ENCODE measurements at regions of chr7 and their contacts with region 1.

Region 1: DNA sequence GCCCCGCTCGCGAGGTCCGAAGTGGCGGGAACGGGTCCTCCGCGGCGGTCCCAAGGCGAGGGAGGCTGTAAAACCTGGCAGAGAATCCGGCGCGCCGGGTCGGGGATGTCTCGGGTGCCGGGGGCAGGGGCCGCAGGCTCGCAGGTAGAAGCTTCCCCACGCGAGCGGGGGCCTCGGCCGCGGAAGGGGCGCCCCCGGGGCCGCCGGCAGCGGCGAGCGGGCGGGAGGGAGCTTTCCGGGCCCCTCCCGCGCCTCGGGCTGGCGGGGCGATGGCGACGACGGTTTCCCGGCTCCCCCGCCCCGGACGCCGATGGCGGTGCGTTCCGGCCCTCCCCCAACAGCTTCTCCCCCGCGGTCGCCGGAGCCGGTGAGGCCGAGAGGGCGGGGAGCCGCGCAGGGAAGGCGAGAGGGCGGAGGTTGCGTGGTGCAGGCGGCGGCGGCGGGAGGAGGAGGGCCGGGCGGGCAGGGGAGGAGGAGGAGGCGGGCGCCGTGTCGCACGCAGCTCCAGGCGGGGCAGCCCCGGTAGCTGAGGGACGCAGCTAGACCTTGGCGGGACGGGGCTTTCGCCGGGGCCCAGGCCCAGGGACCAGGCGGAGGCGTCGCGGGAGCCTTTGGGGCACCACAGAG is at the start of gene CUL1:
- DNase-seq: peak; percentile 75
- ATAC-seq: peak; percentile 76
- H3K4me3 Mint-ChIP-seq: peak within 1 kb of the TSS; percentile 90
- H3K27ac Mint-ChIP-seq: peak within 1 kb of the TSS; percentile 90
- H3K4me1 Mint-ChIP-seq: peaks cover 45% of the 10 kb centered on the region
- H3K27me3 Mint-ChIP-seq: no peaks in the 10 kb centered on the region
- CTCF ChIP-seq: no peak
- total RNA-seq, gene CUL1: 56.9 and 57.4 TPM in 2 replicates

Region 2: DNA sequence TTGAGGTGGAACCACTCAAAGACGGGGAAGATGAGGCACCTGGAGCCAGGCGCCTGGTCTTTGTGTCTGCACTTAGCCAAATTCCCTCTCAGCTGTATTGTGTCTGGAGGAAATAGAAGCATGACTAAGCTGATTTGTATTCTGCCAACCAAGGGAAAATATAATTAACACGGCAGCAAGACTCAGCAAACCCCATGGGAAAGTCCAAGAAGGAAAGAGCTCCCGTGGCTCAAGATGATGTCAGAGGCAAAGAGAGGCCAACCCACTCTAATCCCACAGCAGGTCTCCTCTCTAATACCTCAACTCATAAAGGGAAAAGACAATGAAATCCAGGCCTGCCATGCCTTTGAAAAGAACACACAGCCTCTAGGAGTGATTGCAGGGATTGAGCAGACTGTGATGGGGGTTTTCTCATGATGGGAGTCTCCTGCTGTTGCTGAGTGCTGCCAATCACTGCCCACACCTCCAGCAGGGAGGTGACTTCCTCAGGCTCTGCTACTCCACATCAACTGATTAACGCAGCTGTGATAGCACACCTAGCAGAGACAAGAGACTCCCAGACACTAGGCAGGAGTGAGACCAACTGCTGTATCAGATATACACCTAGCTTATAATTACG is 363.4 kb before region 1 on chr7:
- CTCF ChIA-PET with region 1: no interaction called
- POLR2A ChIA-PET with region 1: no interaction called
- intact Hi-C with region 1: loop called (anchors 1 kb)
- DNase-seq: no peak
- ATAC-seq: no peak
- H3K4me3 Mint-ChIP-seq: no peak overlapping the region
- H3K27ac Mint-ChIP-seq: no peak overlapping the region
- H3K4me1 Mint-ChIP-seq: peaks cover 17% of the 10 kb centered on the region
- H3K27me3 Mint-ChIP-seq: peaks cover 13% of the 10 kb centered on the region
- CTCF ChIP-seq: no peak

Region 3: DNA sequence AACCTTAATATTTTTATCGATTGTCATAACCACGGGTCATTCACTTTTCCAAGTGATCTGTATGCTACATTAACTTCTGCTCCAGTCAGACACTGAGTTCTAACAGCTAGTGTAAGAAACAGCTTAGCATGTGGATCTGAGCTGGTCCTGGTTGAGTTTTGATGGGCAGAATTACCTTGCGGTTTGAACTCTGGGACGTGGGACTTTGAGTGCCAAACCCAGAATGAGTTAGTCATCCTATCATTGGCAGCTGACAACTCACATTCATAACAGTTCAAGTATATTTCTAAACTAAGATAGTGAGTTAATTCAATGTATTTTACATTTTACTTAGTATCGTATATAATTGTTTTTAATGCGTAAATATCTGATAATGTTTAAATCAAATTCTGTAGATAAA is 64.7 kb before region 1 on chr7:
- CTCF ChIA-PET with region 1: no interaction called
- POLR2A ChIA-PET with region 1: interaction called, 3 read pairs
- intact Hi-C with region 1: loop called (anchors 5 kb)
- DNase-seq: no peak
- ATAC-seq: peak; percentile 61
- H3K4me3 Mint-ChIP-seq: peak overlapping the region; percentile 49
- H3K27ac Mint-ChIP-seq: peak overlapping the region; percentile 62
- H3K4me1 Mint-ChIP-seq: peaks cover 28% of the 10 kb centered on the region
- H3K27me3 Mint-ChIP-seq: no peaks in the 10 kb centered on the region
- CTCF ChIP-seq: no peak

Region 4: GRCh38 chr7:148674681-148675080 is 23.8 kb before region 1 on chr7:
- CTCF ChIA-PET with region 1: no interaction called
- POLR2A ChIA-PET with region 1: no interaction called
- intact Hi-C with region 1: no loop called
- DNase-seq: no peak
- ATAC-seq: no peak
- H3K4me3 Mint-ChIP-seq: no peak overlapping the region
- H3K27ac Mint-ChIP-seq: no peak overlapping the region
- H3K4me1 Mint-ChIP-seq: no peaks in the 10 kb centered on the region
- H3K27me3 Mint-ChIP-seq: peaks cover 14% of the 10 kb centered on the region
- CTCF ChIP-seq: no peak

Region 5: DNA sequence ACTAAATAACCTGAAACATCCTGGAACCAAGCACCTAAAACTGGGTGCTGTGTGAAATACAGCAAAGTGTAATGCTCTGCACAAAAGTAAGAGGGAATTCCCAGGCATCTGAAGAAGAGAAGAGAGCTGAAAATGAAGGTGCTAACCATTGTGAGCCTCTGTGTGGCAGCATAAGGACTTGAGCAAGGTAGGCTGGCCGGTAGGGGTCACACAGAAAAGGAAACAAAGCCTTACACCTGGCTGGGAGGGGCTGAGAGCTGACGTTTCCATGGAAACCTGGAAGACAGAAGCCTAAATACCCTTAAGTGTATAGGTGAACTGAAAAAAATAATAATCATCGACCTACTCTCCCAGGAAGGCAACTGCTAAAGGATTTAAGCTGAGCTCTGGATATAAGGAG is 48.8 kb after region 1 on chr7:
- CTCF ChIA-PET with region 1: no interaction called
- POLR2A ChIA-PET with region 1: no interaction called
- intact Hi-C with region 1: loop called (anchors 5 kb)
- DNase-seq: no peak
- ATAC-seq: peak; percentile 31
- H3K4me3 Mint-ChIP-seq: no peak overlapping the region
- H3K27ac Mint-ChIP-seq: no peak overlapping the region
- H3K4me1 Mint-ChIP-seq: peaks cover 2% of the 10 kb centered on the region
- H3K27me3 Mint-ChIP-seq: no peaks in the 10 kb centered on the region
- CTCF ChIP-seq: no peak

Region 6: DNA sequence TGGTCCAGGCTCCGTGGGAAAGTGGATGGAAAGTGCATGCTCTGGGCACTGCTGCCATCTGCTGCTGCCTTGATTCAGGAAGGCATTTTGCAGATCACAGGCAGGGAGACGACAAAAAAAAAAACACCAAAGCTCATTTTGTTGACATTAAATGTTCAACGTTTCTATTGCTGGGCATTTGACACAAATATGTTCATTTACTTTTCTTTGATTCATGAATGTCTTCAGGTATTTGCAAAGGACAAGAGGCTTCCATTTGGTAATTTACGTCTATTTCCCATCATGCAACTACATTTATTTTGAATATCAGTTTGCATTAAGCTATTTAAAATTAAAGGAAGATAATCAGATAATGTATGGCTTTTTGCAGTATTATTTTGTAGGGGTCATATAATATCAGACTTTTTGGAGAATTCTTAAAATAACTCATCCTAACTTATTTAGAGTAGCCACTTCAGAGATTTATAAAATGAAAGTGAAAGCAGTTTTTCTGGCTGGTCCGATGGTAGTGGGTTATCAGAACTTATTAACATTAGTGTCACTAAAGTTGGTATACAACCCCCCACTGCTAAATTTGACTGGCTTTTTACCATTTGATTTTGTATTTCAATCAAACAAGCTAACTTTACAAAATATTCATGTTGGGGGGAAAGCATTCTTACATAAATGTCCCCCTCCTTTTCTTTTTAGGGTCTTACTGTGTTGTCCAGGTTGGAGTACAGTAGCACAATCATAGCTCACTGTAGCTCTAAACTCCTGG is 264.5 kb after region 1 on chr7:
- CTCF ChIA-PET with region 1: no interaction called
- POLR2A ChIA-PET with region 1: interaction called, 8 read pairs
- intact Hi-C with region 1: loop called (anchors 1 kb)
- DNase-seq: no peak
- ATAC-seq: peak; percentile 53
- H3K4me3 Mint-ChIP-seq: peak overlapping the region; percentile 93
- H3K27ac Mint-ChIP-seq: peak overlapping the region; percentile 87
- H3K4me1 Mint-ChIP-seq: peaks cover 29% of the 10 kb centered on the region
- H3K27me3 Mint-ChIP-seq: no peaks in the 10 kb centered on the region
- CTCF ChIP-seq: no peak

Region 7: DNA sequence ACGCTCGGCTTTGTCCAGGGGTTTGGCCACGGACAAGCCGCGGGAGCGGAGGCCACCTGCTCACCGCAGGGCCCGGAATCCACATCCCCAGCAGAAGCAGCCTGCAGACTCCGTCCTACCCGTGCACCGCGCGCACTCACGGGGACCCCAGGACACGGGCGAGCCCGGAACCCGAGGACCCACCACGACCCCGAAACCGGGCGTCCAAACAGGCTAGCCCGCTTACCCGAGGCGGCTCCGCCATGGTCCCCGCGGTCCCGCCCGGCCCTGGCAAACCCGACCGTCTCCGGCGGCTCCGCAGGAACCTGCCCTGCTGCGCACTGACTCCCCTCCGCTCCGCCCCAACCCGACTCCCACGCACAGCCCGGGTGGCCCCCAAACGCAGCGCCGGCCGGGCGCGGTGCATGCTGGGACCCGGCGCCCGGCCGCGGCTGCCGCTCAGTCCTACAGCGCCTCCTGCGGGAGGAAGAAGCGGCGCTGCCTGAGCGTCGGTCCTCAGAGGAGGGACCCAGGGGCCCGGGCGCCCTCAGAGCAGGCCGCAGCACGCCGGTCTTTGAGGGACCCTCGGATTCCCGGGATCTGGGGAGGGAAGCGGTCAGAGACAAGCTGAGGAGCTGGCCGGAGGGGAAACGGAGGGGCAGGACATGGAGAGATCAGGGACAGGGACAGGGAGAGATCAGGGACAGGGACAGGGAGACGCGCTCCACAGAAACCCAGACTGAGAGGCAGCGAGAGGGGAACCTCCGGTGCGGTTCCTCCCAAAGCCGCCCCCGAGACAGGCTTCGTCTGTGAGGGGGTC is 392.1 kb after region 1 on chr7 and contains the start of gene ZNF786:
- CTCF ChIA-PET with region 1: no interaction called
- POLR2A ChIA-PET with region 1: interaction called, 5 read pairs
- intact Hi-C with region 1: loop called (anchors 2 kb)
- DNase-seq: peak; percentile 90
- ATAC-seq: peak; percentile 84
- H3K4me3 Mint-ChIP-seq: peak within 1 kb of the TSS; percentile 100
- H3K27ac Mint-ChIP-seq: peak within 1 kb of the TSS; percentile 100
- H3K4me1 Mint-ChIP-seq: peaks cover 32% of the 10 kb centered on the region
- H3K27me3 Mint-ChIP-seq: no peaks in the 10 kb centered on the region
- CTCF ChIP-seq: no peak
- total RNA-seq, gene ZNF786: 9.2 and 11.0 TPM in 2 replicates

Region 8: GRCh38 chr7:149624419-149625339 is 926.2 kb after region 1 on chr7:
- CTCF ChIA-PET with region 1: no interaction called
- POLR2A ChIA-PET with region 1: no interaction called
- intact Hi-C with region 1: loop called (anchors 10 kb)
- DNase-seq: peak; percentile 95
- ATAC-seq: peak; percentile 92
- H3K4me3 Mint-ChIP-seq: peak overlapping the region; percentile 90
- H3K27ac Mint-ChIP-seq: peak overlapping the region; percentile 80
- H3K4me1 Mint-ChIP-seq: peaks cover 43% of the 10 kb centered on the region
- H3K27me3 Mint-ChIP-seq: peaks cover 5% of the 10 kb centered on the region
- CTCF ChIP-seq: peak; percentile 87